ENCODE measurements at regions of chr4 and their contacts with region 1.

Region 1: GRCh38 chr4:156779774-156780173 is 191.8 kb downstream of the PDGFC start:
- DNase-seq: peak; percentile 59
- H3K4me3 Mint-ChIP-seq: peak overlapping the region; percentile 20
- H3K27ac Mint-ChIP-seq: peak overlapping the region; percentile 52
- H3K4me1 Mint-ChIP-seq: peaks cover 48% of the 10 kb centered on the region
- H3K27me3 Mint-ChIP-seq: no peaks in the 10 kb centered on the region
- CTCF ChIP-seq: no peak

Region 2: GRCh38 chr4:156137679-156138473 is 641.9 kb before region 1 on chr4:
- CTCF ChIA-PET with region 1: no interaction called
- POLR2A ChIA-PET with region 1: no interaction called
- intact Hi-C with region 1: no loop called
- DNase-seq: no peak
- H3K4me3 Mint-ChIP-seq: no peak overlapping the region
- H3K27ac Mint-ChIP-seq: no peak overlapping the region
- H3K4me1 Mint-ChIP-seq: no peaks in the 10 kb centered on the region
- H3K27me3 Mint-ChIP-seq: no peaks in the 10 kb centered on the region
- CTCF ChIP-seq: no peak

Region 3: GRCh38 chr4:156615066-156615531 is 164.7 kb before region 1 on chr4:
- CTCF ChIA-PET with region 1: no interaction called
- POLR2A ChIA-PET with region 1: no interaction called
- intact Hi-C with region 1: no loop called
- DNase-seq: peak; percentile 9
- H3K4me3 Mint-ChIP-seq: no peak overlapping the region
- H3K27ac Mint-ChIP-seq: peak overlapping the region; percentile 20
- H3K4me1 Mint-ChIP-seq: peaks cover 15% of the 10 kb centered on the region
- H3K27me3 Mint-ChIP-seq: no peaks in the 10 kb centered on the region
- CTCF ChIP-seq: no peak

Region 4: GRCh38 chr4:156790866-156791265 is 11.1 kb after region 1 on chr4:
- CTCF ChIA-PET with region 1: interaction called, 5 read pairs
- POLR2A ChIA-PET with region 1: interaction called, 13 read pairs
- intact Hi-C with region 1: no loop called
- DNase-seq: peak; percentile 79
- H3K4me3 Mint-ChIP-seq: no peak overlapping the region
- H3K27ac Mint-ChIP-seq: peak overlapping the region; percentile 54
- H3K4me1 Mint-ChIP-seq: peaks cover 38% of the 10 kb centered on the region
- H3K27me3 Mint-ChIP-seq: no peaks in the 10 kb centered on the region
- CTCF ChIP-seq: no peak

Region 5: DNA sequence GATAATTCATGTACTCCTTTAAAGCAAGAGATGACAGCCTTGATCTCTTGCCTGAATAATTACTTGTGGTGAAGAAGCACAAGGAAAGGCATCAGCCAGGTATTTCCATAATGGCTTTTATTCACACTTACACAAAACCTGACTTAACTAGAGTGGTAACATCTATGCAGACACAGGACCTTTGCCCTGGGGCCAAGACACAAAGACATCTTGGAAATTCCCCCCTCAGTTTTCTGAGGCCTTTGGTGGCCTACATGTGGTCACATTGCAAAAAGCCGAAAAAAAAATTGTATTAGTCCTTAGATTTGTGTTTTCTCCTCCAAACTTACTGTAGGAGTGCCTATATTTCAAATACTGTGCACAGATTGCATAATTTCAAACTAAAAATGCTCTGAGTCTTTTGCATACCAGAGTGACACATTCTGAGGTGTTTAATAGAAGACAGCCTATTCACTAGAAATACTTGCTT is 19.4 kb after region 1 on chr4:
- CTCF ChIA-PET with region 1: interaction called, 5 read pairs
- POLR2A ChIA-PET with region 1: interaction called, 91 read pairs
- intact Hi-C with region 1: loop called (anchors 2 kb)
- DNase-seq: peak; percentile 52
- H3K4me3 Mint-ChIP-seq: no peak overlapping the region
- H3K27ac Mint-ChIP-seq: peak overlapping the region; percentile 65
- H3K4me1 Mint-ChIP-seq: peaks cover 43% of the 10 kb centered on the region
- H3K27me3 Mint-ChIP-seq: no peaks in the 10 kb centered on the region
- CTCF ChIP-seq: no peak

Measured in MCF 10A (cell line).